Activated CD8-positive, alpha-beta T cell treated with anti-CD3 and anti-CD28 coated beads for 36 hours (primary cell): ENCODE measurements at regions of chr2 and their contacts with region 1.

Region 1: DNA sequence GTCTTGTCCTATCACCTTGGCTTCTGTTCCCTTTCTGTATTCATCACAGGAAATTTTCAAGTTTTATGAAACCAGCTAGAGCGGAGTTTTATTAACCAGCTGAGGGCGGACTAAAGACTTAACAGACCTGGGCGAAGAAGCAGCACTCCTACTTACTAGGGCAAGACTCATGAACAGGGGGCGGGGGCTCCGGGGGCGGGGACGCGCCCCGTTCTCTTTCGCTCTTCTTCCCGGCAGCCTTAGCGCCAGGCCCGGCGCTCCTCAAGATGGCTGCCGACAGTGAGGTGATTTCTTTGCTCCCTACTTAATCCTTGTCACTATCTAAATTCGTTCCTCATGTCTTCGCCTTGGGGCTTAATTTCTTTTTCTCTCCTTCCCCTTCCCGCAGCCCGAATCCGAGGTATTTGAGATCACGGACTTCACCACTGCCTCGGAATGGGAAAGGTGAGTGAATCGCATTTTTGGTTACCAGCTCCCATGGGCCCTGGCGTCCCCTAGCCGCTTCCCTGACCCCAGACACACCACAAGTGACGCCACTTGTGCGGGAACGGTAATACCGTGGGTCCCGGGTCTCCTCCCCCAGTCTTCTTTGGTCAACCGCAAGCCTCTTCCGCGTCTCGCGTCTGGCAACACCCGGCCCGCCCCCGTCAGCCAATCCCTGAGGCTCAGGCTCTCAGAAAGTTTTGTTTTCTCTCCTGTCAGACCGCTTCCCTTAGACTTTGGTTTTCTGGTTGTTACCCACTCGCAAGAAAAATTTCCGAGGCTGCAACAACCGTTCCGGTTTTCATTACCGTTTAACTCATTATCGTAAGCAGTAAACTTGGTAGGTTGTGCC is at the start of gene RAB3GAP1:
- DNase-seq: peak; percentile 96
- ATAC-seq: peak; percentile 82
- H3K4me3 Mint-ChIP-seq: peak within 1 kb of the TSS; percentile 94
- H3K27ac Mint-ChIP-seq: peak within 1 kb of the TSS; percentile 100
- H3K4me1 Mint-ChIP-seq: peaks cover 34% of the 10 kb centered on the region
- H3K27me3 Mint-ChIP-seq: no peaks in the 10 kb centered on the region
- CTCF ChIP-seq: no peak
- total RNA-seq, gene RAB3GAP1: 24.7 to 25.6 TPM

Region 2: GRCh38 chr2:134301099-134301927 is 750.9 kb before region 1 on chr2:
- CTCF ChIA-PET with region 1: no interaction called
- POLR2A ChIA-PET with region 1: no interaction called
- intact Hi-C with region 1: no loop called
- DNase-seq: no peak
- ATAC-seq: peak; percentile 83
- H3K4me3 Mint-ChIP-seq: no peak overlapping the region
- H3K27ac Mint-ChIP-seq: peak overlapping the region; percentile 72
- H3K4me1 Mint-ChIP-seq: peaks cover 70% of the 10 kb centered on the region
- H3K27me3 Mint-ChIP-seq: no peaks in the 10 kb centered on the region
- CTCF ChIP-seq: no peak

Region 3: GRCh38 chr2:134918526-134919340 is 133.5 kb before region 1 on chr2 and contains the start of gene CCNT2:
- CTCF ChIA-PET with region 1: no interaction called
- POLR2A ChIA-PET with region 1: interaction called, 3 read pairs
- intact Hi-C with region 1: loop called (anchors 2 kb)
- DNase-seq: peak; percentile 99
- ATAC-seq: peak; percentile 88
- H3K4me3 Mint-ChIP-seq: peak within 1 kb of the TSS; percentile 82
- H3K27ac Mint-ChIP-seq: peak within 1 kb of the TSS; percentile 97
- H3K4me1 Mint-ChIP-seq: peaks cover 30% of the 10 kb centered on the region
- H3K27me3 Mint-ChIP-seq: peaks cover 2% of the 10 kb centered on the region
- CTCF ChIP-seq: no peak
- total RNA-seq, gene CCNT2: 30.5 to 32.1 TPM

Region 4: GRCh38 chr2:135023886-135024485 is 28.3 kb before region 1 on chr2:
- CTCF ChIA-PET with region 1: no interaction called
- POLR2A ChIA-PET with region 1: no interaction called
- intact Hi-C with region 1: no loop called
- DNase-seq: peak; percentile 4
- ATAC-seq: peak; percentile 66
- H3K4me3 Mint-ChIP-seq: peak overlapping the region; percentile 14
- H3K27ac Mint-ChIP-seq: peak overlapping the region; percentile 26
- H3K4me1 Mint-ChIP-seq: peaks cover 19% of the 10 kb centered on the region
- H3K27me3 Mint-ChIP-seq: no peaks in the 10 kb centered on the region
- CTCF ChIP-seq: no peak